Activated CD4-positive, alpha-beta T cell treated with anti-CD3 and anti-CD28 coated beads, Interleukin-2, amount 10 ng/mL, durations not matched to agents 24 days and 14 days (primary cell): ENCODE measurements at regions of chr11 and their contacts with region 1.

Region 1: DNA sequence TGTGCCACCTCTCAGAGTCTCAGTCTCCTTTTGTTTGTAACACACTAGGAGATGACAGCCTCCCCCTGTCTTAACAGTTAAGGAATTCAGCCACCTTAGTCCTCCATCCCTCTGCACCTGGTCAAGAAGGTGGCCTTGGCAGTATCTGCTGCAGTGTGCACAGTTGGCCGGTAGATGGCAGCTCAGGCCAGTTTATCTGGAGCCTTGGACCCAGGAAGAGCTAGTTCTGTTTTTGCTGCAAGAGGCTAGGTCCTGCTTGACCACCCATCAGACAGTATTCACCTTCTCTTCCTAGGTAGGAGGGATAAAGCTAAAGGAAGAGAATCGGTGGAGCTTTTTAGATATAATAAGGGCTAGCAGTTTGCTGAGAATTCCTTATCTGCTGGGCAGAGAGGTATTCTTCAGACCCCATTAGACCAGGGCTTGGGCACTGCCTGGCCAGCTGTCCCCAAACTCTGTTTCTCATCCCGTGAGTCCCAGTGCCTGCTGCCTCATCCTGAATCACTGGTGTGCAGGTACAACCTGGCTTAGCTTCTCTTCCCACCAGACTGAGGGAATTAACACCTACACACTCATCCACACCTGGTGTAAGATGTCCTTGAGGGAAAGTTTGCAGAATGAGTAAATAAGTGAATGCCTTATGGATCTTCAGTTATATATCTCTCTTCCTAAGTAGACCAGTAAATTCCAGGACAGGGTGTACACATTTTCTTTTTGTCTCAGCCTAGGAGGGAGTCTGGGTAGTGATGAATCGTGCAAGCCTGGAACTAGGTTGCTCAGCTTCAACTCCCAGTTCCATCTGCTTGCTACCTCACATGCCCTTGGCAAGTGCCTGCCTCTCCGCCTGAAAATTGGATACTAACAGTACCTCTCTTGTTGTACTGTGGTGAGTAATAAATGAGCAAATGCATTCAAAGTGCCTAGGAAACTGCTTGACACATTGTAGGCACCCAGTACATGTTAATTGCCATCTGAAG is 70.8 kb upstream of the NARS2 start:
- DNase-seq: peak; percentile 90
- H3K4me3 Mint-ChIP-seq: peak overlapping the region; percentile 21
- H3K27ac Mint-ChIP-seq: peak overlapping the region; percentile 21
- H3K4me1 Mint-ChIP-seq: peaks cover 38% of the 10 kb centered on the region
- H3K27me3 Mint-ChIP-seq: no peaks in the 10 kb centered on the region

Region 2: GRCh38 chr11:78228467-78228866 is 417.0 kb before region 1 on chr11:
- intact Hi-C with region 1: loop called (anchors 1 kb)
- DNase-seq: peak; percentile 83
- H3K4me3 Mint-ChIP-seq: no peak overlapping the region
- H3K27ac Mint-ChIP-seq: peak overlapping the region; percentile 31
- H3K4me1 Mint-ChIP-seq: peaks cover 59% of the 10 kb centered on the region
- H3K27me3 Mint-ChIP-seq: no peaks in the 10 kb centered on the region

Region 3: GRCh38 chr11:78465169-78465942 is 180.2 kb before region 1 on chr11:
- intact Hi-C with region 1: loop called (anchors 2 kb)
- DNase-seq: peak; percentile 88
- H3K4me3 Mint-ChIP-seq: peak overlapping the region; percentile 59
- H3K27ac Mint-ChIP-seq: peak overlapping the region; percentile 80
- H3K4me1 Mint-ChIP-seq: peaks cover 40% of the 10 kb centered on the region
- H3K27me3 Mint-ChIP-seq: no peaks in the 10 kb centered on the region

Region 4: DNA sequence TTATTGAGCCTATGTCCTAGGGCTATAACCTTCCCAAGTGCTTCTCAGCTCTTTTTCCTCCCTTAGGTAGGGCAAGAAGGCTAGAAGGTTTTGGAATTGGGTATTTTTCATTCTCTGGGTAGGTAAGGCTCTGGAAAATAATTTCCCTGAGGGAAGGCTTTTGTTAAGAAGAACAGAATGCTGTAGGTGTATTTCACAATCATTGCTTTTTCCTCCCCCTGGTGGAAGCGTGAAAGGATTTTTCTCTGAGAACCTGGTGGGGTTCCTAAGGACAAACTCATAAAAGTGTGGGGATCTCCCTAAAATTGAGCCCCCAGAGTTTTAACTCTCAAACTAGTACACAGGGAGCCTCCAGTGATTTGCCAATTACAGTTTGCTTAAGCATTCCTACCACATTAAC is 29.8 kb before region 1 on chr11:
- intact Hi-C with region 1: no loop called
- DNase-seq: no peak
- H3K4me3 Mint-ChIP-seq: no peak overlapping the region
- H3K27ac Mint-ChIP-seq: no peak overlapping the region
- H3K4me1 Mint-ChIP-seq: no peaks in the 10 kb centered on the region
- H3K27me3 Mint-ChIP-seq: peaks cover 2% of the 10 kb centered on the region

Region 5: DNA sequence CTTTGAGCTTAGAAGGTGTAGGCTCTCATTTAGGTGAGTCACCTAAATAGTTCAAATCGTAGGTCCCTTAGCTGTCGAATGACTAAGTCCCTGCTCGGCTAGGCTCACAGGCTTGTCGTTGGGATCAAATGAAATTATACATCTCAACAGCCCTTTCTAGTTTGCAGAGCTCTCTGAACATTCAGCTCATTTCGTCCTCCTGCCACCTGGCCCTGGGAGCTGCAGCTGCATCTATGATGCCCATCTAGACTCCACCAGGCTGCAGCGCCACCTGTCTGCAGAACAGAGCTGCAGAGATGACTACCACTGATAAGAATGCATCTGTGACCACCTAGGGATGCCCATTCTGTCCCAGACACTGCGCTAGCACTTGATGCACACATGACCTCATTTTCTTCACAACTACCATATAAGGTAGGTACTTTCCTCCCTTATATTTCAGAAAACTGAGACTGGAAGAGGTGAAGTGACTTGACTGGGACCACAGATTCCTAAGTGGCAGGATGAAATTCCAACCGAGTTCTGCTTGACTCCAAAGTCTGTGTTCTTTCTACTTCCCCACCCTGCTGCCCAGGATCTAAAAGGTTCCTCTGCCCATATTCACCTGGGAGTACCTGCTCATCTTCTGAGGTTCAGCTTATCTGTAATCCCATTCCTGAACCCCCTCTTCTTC is 70.3 kb after region 1 on chr11:
- intact Hi-C with region 1: loop called (anchors 1 kb)
- DNase-seq: peak; percentile 80
- H3K4me3 Mint-ChIP-seq: no peak overlapping the region
- H3K27ac Mint-ChIP-seq: no peak overlapping the region
- H3K4me1 Mint-ChIP-seq: no peaks in the 10 kb centered on the region
- H3K27me3 Mint-ChIP-seq: peaks cover 6% of the 10 kb centered on the region

Region 6: GRCh38 chr11:79076526-79077115 is 431.1 kb after region 1 on chr11:
- intact Hi-C with region 1: loop called (anchors 2 kb)
- DNase-seq: peak; percentile 66
- H3K4me3 Mint-ChIP-seq: no peak overlapping the region
- H3K27ac Mint-ChIP-seq: no peak overlapping the region
- H3K4me1 Mint-ChIP-seq: no peaks in the 10 kb centered on the region
- H3K27me3 Mint-ChIP-seq: no peaks in the 10 kb centered on the region

Region 7: GRCh38 chr11:79139900-79140299 is 494.4 kb after region 1 on chr11:
- intact Hi-C with region 1: loop called (anchors 5 kb)
- DNase-seq: peak; percentile 60
- H3K4me3 Mint-ChIP-seq: no peak overlapping the region
- H3K27ac Mint-ChIP-seq: no peak overlapping the region
- H3K4me1 Mint-ChIP-seq: no peaks in the 10 kb centered on the region
- H3K27me3 Mint-ChIP-seq: no peaks in the 10 kb centered on the region